ENCODE measurements at regions of chr5 and their contacts with region 1.

Region 1: DNA sequence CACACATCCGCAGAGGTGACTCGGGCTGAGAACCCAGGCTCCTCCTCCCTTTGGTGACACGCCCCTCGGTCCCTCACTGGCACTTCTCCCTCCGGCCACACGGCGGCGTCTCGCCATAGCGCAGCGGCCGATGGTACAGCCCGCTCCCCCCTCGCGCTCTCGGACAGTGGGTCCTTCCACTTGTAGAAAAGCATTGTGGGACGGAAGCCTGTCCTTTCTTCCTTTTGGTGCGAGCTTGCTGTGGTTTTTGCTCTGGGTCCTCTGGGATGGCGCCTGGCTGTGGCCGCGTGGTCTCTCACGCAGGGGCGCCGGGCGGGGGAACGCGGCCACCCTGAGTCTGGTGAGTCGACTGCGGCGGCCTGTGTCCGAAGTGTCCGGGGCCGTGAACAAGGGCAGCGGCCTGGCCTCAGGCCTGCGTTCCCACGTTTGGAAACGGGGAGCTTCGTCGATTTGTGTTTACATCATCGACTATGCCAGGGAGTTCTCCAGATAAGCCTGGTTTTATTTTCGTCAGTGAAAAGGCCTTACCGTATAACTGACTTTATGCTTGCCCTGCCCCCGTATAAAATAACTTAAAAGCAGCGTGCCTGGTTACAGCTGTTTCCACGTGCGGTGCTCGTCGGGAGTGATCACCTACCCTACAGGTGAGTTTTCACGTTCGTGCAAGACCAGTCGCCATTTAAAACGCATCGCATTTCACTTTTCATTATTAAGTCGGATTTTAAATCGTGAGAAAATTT is 258.3 kb downstream of the EPB41L4A start:
- DNase-seq: peak; percentile 94
- H3K4me3 Mint-ChIP-seq: peak overlapping the region; percentile 91
- H3K27ac Mint-ChIP-seq: peak overlapping the region; percentile 50
- H3K4me1 Mint-ChIP-seq: peaks cover 33% of the 10 kb centered on the region
- H3K27me3 Mint-ChIP-seq: no peaks in the 10 kb centered on the region

Region 2: GRCh38 chr5:110738812-110739651 is 1421.8 kb before region 1 on chr5 and contains the start of gene SLC25A46:
- CTCF ChIA-PET with region 1: interaction called, 3 read pairs
- POLR2A ChIA-PET with region 1: no interaction called
- intact Hi-C with region 1: loop called (anchors 5 kb)
- DNase-seq: peak; percentile 93
- H3K4me3 Mint-ChIP-seq: peak within 1 kb of the TSS; percentile 91
- H3K27ac Mint-ChIP-seq: peak within 1 kb of the TSS; percentile 84
- H3K4me1 Mint-ChIP-seq: peaks cover 34% of the 10 kb centered on the region
- H3K27me3 Mint-ChIP-seq: peaks cover 5% of the 10 kb centered on the region
- total RNA-seq, gene SLC25A46: 35.4 to 37.6 TPM

Region 3: DNA sequence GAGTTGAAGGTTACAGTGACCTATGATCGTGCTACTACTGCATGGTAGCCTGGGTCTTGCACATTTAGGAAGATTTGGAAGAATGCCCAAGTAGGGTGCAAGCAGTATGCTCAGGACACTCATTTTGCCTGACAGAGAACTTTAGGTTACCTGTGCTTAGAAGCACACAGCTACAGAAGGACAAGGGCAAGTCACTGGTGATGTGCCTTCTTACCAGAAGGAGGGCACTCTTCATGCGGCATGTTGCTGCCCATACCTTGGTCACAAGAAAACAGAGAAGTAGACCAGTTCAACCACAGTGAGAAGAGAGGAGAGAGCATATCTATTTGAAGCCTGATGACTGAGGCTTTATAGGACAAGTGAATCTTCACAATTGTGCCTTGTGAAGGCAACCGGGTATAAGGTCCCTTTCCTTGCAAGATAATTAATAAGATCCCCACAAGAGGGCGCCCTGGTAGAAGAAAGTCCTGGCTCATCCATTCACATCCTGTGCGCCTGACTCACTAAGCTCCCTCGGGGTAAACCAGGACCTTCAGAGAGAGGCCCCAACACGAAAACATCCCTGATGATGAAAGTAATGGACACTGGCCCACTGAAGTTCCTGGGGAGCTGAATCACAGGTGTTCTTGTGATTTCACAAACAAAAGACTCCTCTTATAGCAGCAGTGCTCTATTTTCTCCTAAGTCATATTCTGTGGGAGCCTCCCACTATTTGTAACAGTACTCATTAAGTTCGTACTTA is 610.4 kb before region 1 on chr5:
- CTCF ChIA-PET with region 1: interaction called, 9 read pairs
- POLR2A ChIA-PET with region 1: no interaction called
- intact Hi-C with region 1: loop called (anchors 5 kb)
- DNase-seq: peak; percentile 76
- H3K4me3 Mint-ChIP-seq: no peak overlapping the region
- H3K27ac Mint-ChIP-seq: no peak overlapping the region
- H3K4me1 Mint-ChIP-seq: peaks cover 18% of the 10 kb centered on the region
- H3K27me3 Mint-ChIP-seq: peaks cover 1% of the 10 kb centered on the region

Region 4: GRCh38 chr5:112174959-112175594 is 14.3 kb after region 1 on chr5:
- CTCF ChIA-PET with region 1: interaction called, 51 read pairs
- POLR2A ChIA-PET with region 1: interaction called, 5 read pairs
- intact Hi-C with region 1: no loop called
- DNase-seq: peak; percentile 33
- H3K4me3 Mint-ChIP-seq: no peak overlapping the region
- H3K27ac Mint-ChIP-seq: no peak overlapping the region
- H3K4me1 Mint-ChIP-seq: peaks cover 2% of the 10 kb centered on the region
- H3K27me3 Mint-ChIP-seq: peaks cover 10% of the 10 kb centered on the region

Region 5: GRCh38 chr5:112707187-112708102 is 546.6 kb after region 1 on chr5:
- CTCF ChIA-PET with region 1: no interaction called
- POLR2A ChIA-PET with region 1: no interaction called
- intact Hi-C with region 1: loop called (anchors 1 kb)
- DNase-seq: peak; percentile 98
- H3K4me3 Mint-ChIP-seq: peak overlapping the region; percentile 87
- H3K27ac Mint-ChIP-seq: peak overlapping the region; percentile 87
- H3K4me1 Mint-ChIP-seq: peaks cover 49% of the 10 kb centered on the region
- H3K27me3 Mint-ChIP-seq: no peaks in the 10 kb centered on the region

Region 6: GRCh38 chr5:112968411-112969106 is 807.7 kb after region 1 on chr5:
- CTCF ChIA-PET with region 1: no interaction called
- POLR2A ChIA-PET with region 1: no interaction called
- intact Hi-C with region 1: loop called (anchors 10 kb)
- DNase-seq: no peak
- H3K4me3 Mint-ChIP-seq: no peak overlapping the region
- H3K27ac Mint-ChIP-seq: no peak overlapping the region
- H3K4me1 Mint-ChIP-seq: peaks cover 45% of the 10 kb centered on the region
- H3K27me3 Mint-ChIP-seq: no peaks in the 10 kb centered on the region

Measured in activated CD4-positive, alpha-beta memory T cell treated with anti-CD3 and anti-CD28 coated beads for 36 hours (primary cell).